CD8-positive, alpha-beta memory T cell (primary cell): ENCODE measurements at regions of chr22 and their contacts with region 1.

Region 1: GRCh38 chr22:44701824-44702478 is at the start of gene PRR5:
- DNase-seq: peak; percentile 75 to 93 (median 78)
- H3K4me3 ChIP-seq: peak within 1 kb of the TSS; percentile 63
- H3K4me3 Mint-ChIP-seq: peak within 1 kb of the TSS; percentile 82 to 91 (median 85)
- H3K27ac ChIP-seq: peak within 1 kb of the TSS; percentile 54
- H3K27ac Mint-ChIP-seq: peak within 1 kb of the TSS; percentile 57 to 91 (median 91)
- H3K4me1 ChIP-seq: peaks cover 37% of the 10 kb centered on the region
- H3K4me1 Mint-ChIP-seq: peaks cover 38 to 60% (median 40%) of the 10 kb centered on the region in 3 donors
- H3K27me3 ChIP-seq: no peaks in the 10 kb centered on the region
- H3K27me3 Mint-ChIP-seq: no peaks in the 10 kb centered on the region
- total RNA-seq, gene PRR5: 26.4 to 29.9 TPM

Region 2: DNA sequence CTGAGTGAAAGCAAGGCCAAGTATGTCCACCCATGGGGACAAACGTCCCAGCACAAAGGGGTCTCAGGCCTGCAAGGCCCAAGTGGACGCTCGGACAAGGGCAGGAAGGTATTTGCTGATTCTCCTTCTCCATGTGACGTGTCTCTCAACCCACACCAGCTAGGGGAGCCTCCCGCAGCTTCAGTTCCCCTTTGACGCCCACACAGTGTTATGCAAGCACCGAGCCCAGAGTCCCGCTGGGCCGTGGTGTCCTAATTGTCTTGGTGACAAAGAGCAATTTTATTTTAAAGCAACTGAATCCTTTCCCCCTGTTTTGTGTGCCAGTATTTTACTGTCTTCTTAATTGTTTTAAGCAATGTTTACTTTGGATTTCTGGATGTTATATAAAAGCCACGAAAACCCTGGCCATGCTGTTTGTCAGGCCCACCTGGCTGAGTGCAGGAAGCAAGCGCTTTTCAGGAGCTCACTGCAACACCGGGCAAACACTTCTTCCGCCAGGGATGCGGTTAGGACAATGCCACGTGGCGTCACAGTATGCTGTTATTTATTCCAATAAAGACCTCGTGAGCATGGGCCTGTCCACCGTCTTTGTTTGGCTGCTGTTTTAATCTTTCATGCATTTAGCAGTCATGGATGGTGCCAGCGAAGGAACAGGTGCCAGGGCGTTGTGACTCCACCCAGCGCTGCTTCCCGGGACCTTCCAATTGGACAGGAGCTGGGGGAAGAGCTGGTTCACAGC is 529.4 kb before region 1 on chr22:
- CTCF ChIA-PET with region 1: no interaction called
- POLR2A ChIA-PET with region 1: no interaction called
- DNase-seq: no peak
- H3K4me3 ChIP-seq: no peak overlapping the region
- H3K4me3 Mint-ChIP-seq: no peak overlapping the region
- H3K27ac ChIP-seq: no peak overlapping the region
- H3K27ac Mint-ChIP-seq: peak overlapping the region in 1 of 8 donors; percentile 50
- H3K4me1 ChIP-seq: no peaks in the 10 kb centered on the region
- H3K4me1 Mint-ChIP-seq: no peaks in the 10 kb centered on the region
- H3K27me3 ChIP-seq: no peaks in the 10 kb centered on the region
- H3K27me3 Mint-ChIP-seq: no peaks in the 10 kb centered on the region

Region 3: GRCh38 chr22:44664149-44664548 is 37.8 kb before region 1 on chr22:
- CTCF ChIA-PET with region 1: no interaction called
- POLR2A ChIA-PET with region 1: no interaction called
- DNase-seq: peak; percentile 36 to 76 (median 50)
- H3K4me3 ChIP-seq: peak overlapping the region; percentile 49
- H3K4me3 Mint-ChIP-seq: peak overlapping the region; percentile 30 to 79 (median 60)
- H3K27ac ChIP-seq: peak overlapping the region; percentile 39
- H3K27ac Mint-ChIP-seq: peak overlapping the region; percentile 82 to 93 (median 87)
- H3K4me1 ChIP-seq: peaks cover 51% of the 10 kb centered on the region
- H3K4me1 Mint-ChIP-seq: peaks cover 49 to 67% (median 57%) of the 10 kb centered on the region in 3 donors
- H3K27me3 ChIP-seq: no peaks in the 10 kb centered on the region
- H3K27me3 Mint-ChIP-seq: no peaks in the 10 kb centered on the region

Region 4: DNA sequence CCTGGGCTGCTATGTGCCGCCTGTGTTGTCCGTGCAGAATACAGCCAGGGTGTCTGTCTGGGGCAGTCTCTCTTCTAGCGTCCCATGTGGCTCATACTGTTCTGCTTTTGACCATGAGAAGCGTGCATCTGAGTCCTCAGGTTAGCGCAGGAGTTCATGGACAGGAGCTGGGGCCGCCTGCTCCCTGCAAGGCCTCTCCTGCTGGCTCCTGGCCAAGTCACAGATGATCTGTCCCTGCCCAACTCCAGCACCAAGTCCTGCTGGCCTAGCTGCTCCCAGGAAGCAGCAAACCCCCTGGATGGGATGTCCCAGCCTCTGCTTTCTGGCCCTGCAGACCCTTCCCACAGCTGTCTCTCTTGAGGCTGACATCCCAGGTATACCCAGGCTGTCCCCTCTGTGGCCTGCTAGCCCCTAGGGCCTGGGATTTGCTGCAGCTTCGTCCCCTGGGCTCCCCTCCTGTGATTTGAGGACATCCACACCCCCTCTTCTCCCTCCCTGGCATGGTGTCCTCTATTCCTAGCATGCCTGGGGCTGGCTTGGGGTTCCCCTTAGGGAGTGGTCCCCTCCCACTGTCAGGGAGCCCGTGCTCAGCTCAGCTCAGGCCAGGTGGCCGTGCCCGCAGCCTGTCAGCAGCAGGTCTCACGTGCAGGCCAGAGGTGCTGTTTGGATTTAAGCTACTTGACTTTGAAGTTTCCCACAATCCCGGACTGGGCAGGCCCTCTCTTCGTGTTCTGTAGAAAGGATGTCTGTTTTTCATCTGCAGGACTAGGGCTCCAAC is 17.8 kb after region 1 on chr22:
- CTCF ChIA-PET with region 1: interaction called, 11 read pairs
- POLR2A ChIA-PET with region 1: no interaction called
- DNase-seq: no peak
- H3K4me3 ChIP-seq: no peak overlapping the region
- H3K4me3 Mint-ChIP-seq: peak overlapping the region in 1 of 7 donors; percentile 82
- H3K27ac ChIP-seq: no peak overlapping the region
- H3K27ac Mint-ChIP-seq: peak overlapping the region in 7 of 8 donors; percentile 22 to 94 (median 56)
- H3K4me1 ChIP-seq: no peaks in the 10 kb centered on the region
- H3K4me1 Mint-ChIP-seq: peaks cover 18 to 28% (median 19%) of the 10 kb centered on the region in 3 donors
- H3K27me3 ChIP-seq: no peaks in the 10 kb centered on the region
- H3K27me3 Mint-ChIP-seq: no peaks in the 10 kb centered on the region

Region 5: DNA sequence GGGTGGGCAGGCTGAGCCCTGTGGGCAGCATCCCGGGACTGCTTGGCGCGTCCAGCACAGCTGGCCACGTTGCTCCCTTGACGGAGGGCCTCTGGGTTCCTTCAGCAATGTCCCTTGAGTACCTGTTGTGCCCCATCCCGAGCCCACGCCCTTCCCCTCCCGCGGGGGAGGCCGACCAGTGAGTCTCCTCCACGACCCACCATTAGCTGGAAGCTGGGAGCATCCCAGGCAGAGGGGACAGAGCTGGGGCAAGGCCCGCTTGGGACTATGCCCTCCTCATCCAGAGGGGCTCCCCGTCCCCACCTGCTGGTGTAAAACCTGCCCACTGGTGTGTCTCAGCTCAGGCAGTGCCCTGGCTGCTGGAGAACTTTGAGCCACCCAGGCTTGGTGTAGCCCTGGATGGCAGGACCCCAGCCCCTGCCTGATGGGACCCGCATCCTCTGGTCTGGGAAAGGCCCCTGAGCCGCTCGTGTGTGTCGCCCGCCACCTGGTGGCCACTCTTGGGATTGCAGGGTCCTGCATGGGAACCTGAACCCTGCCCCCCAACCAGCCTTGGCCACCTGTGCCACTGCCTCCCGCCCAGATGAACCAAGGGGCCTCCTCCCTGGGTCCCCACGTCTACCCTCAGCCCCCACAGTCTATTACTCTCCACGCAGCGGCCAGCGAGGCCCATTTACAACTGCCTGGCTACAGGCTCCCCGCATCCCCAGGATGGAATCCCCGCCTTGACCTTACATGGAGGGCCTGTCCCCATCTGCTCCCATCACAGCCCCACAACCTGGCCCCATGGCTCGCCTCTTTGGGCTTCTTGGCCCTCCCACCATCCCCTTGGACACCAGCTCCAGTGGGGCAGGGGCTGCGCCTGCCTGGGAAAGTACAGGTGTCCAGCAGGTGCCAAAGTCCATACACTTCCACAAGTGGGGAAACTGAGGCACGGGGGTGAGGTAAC is 33.9 kb after region 1 on chr22:
- CTCF ChIA-PET with region 1: interaction called, 42 read pairs
- POLR2A ChIA-PET with region 1: no interaction called
- DNase-seq: peak; percentile 70 to 88 (median 78)
- H3K4me3 ChIP-seq: no peak overlapping the region
- H3K4me3 Mint-ChIP-seq: no peak overlapping the region
- H3K27ac ChIP-seq: no peak overlapping the region
- H3K27ac Mint-ChIP-seq: peak overlapping the region in 7 of 8 donors; percentile 3 to 84 (median 68)
- H3K4me1 ChIP-seq: no peaks in the 10 kb centered on the region
- H3K4me1 Mint-ChIP-seq: peaks cover 5 to 8% (median 6%) of the 10 kb centered on the region in 3 donors
- H3K27me3 ChIP-seq: no peaks in the 10 kb centered on the region
- H3K27me3 Mint-ChIP-seq: no peaks in the 10 kb centered on the region